CD4-positive, alpha-beta T cell (primary cell): ENCODE measurements at regions of chr1 and their contacts with region 1.

Region 1: GRCh38 chr1:205849619-205850355 is at the start of gene PM20D1:
- DNase-seq: peak; percentile 52 to 96 (median 77)
- ATAC-seq: peak; percentile 97
- H3K4me3 ChIP-seq: peak within 1 kb of the TSS; percentile 64
- H3K4me3 Mint-ChIP-seq: peak within 1 kb of the TSS; percentile 96
- H3K27ac ChIP-seq: peak within 1 kb of the TSS; percentile 44 to 67
- H3K27ac Mint-ChIP-seq: peak within 1 kb of the TSS; percentile 85
- H3K4me1 ChIP-seq: peaks cover 16% of the 10 kb centered on the region
- H3K4me1 Mint-ChIP-seq: peaks cover 17% of the 10 kb centered on the region
- H3K27me3 ChIP-seq: no peaks in the 10 kb centered on the region
- H3K27me3 Mint-ChIP-seq: no peaks in the 10 kb centered on the region
- CTCF ChIP-seq: no peak
- total RNA-seq, gene PM20D1: 1.2 to 1.4 TPM

Region 2: DNA sequence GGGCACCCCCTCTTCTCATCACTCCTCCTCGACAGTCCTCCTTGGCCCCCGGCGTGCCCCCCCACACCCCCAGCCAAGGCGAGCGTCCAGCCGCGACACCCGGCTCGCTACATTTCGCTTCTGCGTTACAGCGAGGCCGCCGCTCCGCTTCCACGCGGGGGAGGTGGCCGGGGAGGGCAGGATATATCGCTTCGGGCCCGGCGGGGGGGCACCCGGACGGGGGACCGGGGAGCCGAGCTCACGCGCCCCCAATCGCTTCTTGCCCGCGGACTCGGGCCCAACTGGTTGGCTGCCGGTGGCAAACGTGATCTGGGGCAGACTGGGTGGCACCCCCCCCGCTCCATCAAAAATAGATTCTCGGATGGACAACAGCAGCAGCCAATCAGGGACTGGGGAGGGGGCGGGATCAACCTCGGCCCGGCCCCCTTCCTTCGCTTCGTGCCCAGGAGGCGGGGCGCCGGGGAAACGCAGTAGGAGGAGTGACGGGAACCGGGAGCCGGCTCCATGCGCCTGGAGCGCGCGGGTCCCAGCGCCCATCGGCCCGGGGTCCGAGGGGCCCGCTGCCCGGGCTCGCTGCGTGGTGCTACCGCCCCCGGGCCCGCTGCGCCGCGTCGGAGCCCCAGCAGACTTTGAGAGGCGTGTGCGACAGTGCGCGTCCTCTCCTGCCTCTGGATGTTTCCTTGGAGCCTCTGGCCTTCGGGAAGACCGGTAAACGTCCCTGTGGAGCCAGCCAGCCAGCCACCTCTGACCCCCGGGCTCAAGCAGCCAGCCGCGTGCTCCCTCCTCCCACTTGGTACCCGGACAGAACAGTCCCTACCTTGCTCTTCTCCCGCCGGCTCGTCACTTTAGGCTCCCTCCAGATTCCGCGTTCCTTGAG is 36.7 kb before region 1 on chr1 and contains the start of gene SLC41A1:
- CTCF ChIA-PET with region 1: no interaction called
- POLR2A ChIA-PET with region 1: interaction called, 17 read pairs
- intact Hi-C with region 1: loop called in 1 of 2 experiments (anchors 2 kb)
- DNase-seq: peak; percentile 85 to 97 (median 90)
- ATAC-seq: peak; percentile 95
- H3K4me3 ChIP-seq: peak within 1 kb of the TSS; percentile 97
- H3K4me3 Mint-ChIP-seq: peak within 1 kb of the TSS; percentile 97
- H3K27ac ChIP-seq: peak within 1 kb of the TSS; percentile 19 to 60
- H3K27ac Mint-ChIP-seq: peak within 1 kb of the TSS; percentile 85
- H3K4me1 ChIP-seq: peaks cover 53% of the 10 kb centered on the region
- H3K4me1 Mint-ChIP-seq: peaks cover 60% of the 10 kb centered on the region
- H3K27me3 ChIP-seq: no peaks in the 10 kb centered on the region
- H3K27me3 Mint-ChIP-seq: no peaks in the 10 kb centered on the region
- CTCF ChIP-seq: no peak
- total RNA-seq, gene SLC41A1: 23.8 to 26.4 TPM

Region 3: GRCh38 chr1:205870236-205870635 is 20.4 kb after region 1 on chr1:
- CTCF ChIA-PET with region 1: no interaction called
- POLR2A ChIA-PET with region 1: no interaction called
- intact Hi-C with region 1: no loop called
- DNase-seq: no peak
- ATAC-seq: no peak
- H3K4me3 ChIP-seq: no peak overlapping the region
- H3K4me3 Mint-ChIP-seq: no peak overlapping the region
- H3K27ac ChIP-seq: no peak overlapping the region
- H3K27ac Mint-ChIP-seq: no peak overlapping the region
- H3K4me1 ChIP-seq: no peaks in the 10 kb centered on the region
- H3K4me1 Mint-ChIP-seq: no peaks in the 10 kb centered on the region
- H3K27me3 ChIP-seq: no peaks in the 10 kb centered on the region
- H3K27me3 Mint-ChIP-seq: peaks cover 8% of the 10 kb centered on the region
- CTCF ChIP-seq: no peak

Region 4: GRCh38 chr1:205961405-205961804 is 111.6 kb after region 1 on chr1:
- CTCF ChIA-PET with region 1: no interaction called
- POLR2A ChIA-PET with region 1: no interaction called
- intact Hi-C with region 1: no loop called
- DNase-seq: no peak
- ATAC-seq: no peak
- H3K4me3 ChIP-seq: no peak overlapping the region
- H3K4me3 Mint-ChIP-seq: no peak overlapping the region
- H3K27ac ChIP-seq: no peak overlapping the region
- H3K27ac Mint-ChIP-seq: no peak overlapping the region
- H3K4me1 ChIP-seq: no peaks in the 10 kb centered on the region
- H3K4me1 Mint-ChIP-seq: no peaks in the 10 kb centered on the region
- H3K27me3 ChIP-seq: peaks cover 0 to 4% of the 10 kb centered on the region in 2 experiments
- H3K27me3 Mint-ChIP-seq: peaks cover 25% of the 10 kb centered on the region
- CTCF ChIP-seq: no peak